ENCODE measurements at regions of chr2 and their contacts with region 1.

Region 1: GRCh38 chr2:115414466-115414865 is 972.0 kb downstream of the DPP10 start:
- DNase-seq: no peak

Region 2: GRCh38 chr2:114350186-114350725 is 1064.2 kb before region 1 on chr2:
- intact Hi-C with region 1: no loop called
- DNase-seq: no peak

Region 3: DNA sequence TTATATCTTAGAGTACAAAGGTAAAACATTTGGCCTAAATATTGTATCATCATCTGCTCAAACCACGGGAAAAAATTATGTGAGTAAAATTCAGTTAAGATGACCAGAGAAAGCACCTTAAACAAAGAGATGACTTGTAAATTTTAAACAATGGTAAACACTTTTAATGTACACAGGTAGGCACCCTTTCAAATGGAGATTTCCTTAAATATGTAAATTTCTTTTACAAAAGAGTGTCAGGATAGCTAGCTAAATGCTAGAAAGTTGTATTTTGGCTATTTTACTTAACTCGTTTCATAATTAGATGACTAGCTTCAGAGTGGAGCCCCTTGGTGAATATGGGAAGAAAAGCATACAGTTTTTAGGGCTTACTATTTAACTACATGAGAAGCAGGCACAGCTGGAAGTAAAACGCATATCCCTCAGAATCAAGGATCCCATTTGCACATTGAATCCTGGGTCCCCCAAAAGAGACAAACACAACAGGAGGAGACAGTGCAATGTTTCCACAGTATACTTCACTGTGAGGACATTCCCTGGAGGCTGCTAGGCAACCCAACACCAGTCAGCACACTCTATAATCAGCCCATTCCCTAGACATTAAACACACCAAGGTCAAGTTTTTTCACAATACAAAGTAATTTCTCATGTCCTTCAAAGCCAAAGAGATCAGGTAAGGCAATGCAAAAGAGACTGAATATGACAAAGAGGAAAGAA is 182.4 kb after region 1 on chr2:
- intact Hi-C with region 1: no loop called
- DNase-seq: no peak

Region 4: GRCh38 chr2:117199511-117199910 is 1785.0 kb after region 1 on chr2:
- intact Hi-C with region 1: loop called in 1 of 2 experiments (anchors 10 kb)
- DNase-seq: no peak